ENCODE measurements at regions of chr1 and their contacts with region 1.

Region 1: DNA sequence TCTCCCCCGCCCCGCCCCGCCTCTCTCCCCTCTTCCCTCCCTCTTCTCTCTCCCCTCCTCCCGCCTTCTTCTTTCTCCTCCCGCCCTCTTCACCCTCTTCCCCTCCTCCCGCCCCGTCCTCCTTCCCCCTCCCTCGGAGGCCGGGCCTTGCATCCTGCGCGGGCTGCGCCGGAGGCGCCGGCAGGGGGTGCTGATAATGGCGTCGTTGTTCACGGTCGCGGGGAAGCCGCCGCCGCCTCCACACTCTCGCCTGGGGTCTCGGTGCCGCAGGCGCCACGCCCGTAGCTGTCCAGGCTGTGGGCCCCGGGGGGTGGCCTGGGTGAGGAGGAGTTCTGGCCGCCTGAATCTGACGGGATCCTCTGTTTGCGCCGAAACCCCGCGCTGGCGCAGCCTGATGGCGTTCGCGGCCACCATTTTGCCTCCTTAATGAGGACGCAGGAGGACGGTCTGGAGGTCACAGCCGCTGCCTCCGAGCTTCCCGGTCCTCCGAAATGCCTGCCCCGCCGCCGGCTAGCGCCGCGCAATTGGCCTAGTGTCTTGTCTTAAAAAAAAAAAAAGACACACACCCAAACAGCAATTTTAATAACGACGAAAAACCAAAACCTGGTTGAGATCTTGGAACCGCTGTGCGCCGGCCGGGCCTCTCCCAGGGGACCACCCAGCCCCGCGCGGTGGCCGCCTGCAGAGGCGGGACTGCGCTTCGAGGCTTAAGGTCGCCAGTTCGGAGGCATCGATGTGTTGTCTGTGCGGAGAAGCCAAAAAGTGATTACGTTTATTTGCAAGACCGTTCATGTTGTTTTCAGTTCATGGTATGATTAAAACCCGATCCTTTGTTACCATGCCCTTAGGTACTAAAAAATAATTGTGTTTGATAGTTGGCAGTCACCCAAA is 106.6 kb upstream of the HNRNPU start:
- DNase-seq: peak; percentile 96
- ATAC-seq: peak; percentile 66
- H3K4me3 ChIP-seq: peak overlapping the region; percentile 74
- H3K27ac ChIP-seq: peak overlapping the region; percentile 95
- H3K4me1 ChIP-seq: peaks cover 17% of the 10 kb centered on the region
- H3K27me3 ChIP-seq: no peaks in the 10 kb centered on the region
- CTCF ChIP-seq: peak; percentile 65

Region 2: DNA sequence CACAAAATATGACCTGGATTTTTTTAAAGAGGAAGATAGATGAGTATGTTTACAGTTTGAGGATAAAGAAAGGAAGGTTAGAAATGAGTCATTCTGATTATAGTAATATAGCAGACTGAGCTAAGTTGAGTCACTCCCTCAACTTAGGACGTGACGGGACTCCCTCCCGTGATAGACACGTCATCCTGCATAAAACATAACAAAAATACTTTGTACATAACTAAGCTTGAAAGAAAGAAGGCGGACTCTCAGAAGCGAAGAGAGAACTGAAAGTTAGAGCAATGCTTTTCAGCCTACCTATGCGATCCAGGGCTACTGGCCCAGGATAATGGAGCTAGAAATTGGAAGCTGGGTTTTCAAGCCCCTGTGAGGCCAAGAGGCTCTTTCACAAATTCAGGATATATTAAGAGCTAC is 371.0 kb before region 1 on chr1:
- CTCF ChIA-PET with region 1: no interaction called
- POLR2A ChIA-PET with region 1: no interaction called
- intact Hi-C with region 1: loop called (anchors 5 kb)
- DNase-seq: peak; percentile 98
- ATAC-seq: peak; percentile 95
- H3K4me3 ChIP-seq: peak overlapping the region; percentile 65
- H3K27ac ChIP-seq: peak overlapping the region; percentile 55
- H3K4me1 ChIP-seq: peaks cover 13% of the 10 kb centered on the region
- H3K27me3 ChIP-seq: no peaks in the 10 kb centered on the region
- CTCF ChIP-seq: no peak

Region 3: DNA sequence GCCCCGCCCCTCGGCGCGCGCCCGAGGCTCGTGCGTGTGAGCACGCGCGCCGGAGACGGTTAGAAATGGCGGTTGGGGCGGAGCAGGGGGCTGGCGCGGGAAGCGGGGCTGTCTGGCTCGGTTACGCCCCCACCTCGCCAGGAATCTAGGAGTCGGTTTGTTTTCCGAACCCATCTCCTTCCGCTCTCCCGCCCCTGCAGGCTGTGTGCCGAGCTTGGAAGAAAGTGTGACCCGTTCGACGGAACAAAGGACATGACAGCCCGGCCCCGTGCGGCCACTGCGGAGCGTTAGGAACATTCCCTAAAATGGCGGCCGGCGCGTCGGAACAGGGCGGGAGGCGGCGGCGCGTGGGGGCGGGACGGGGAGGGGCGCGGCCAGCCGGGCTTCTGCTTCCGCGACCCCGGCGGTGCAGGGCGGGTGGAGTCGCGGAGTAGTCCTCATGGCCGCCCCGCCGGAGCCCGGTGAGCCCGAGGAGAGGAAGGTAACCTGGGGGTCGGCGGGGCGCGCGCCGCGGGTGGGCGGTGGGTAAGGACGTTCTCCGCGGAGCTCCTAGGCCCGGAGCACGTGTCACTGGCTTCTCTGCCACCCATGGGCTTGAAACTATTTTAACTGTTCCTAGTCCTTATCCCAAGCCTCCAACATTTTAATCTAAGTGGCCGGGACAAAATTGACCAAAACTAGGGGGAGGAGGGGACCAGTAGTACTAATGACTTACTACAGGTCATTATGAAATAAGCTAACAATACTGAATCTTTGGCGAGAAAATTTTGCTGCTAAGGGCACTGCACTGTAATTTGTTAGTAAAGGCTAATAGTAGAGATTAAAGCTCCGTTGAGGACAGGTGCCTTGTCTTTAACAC is 135.4 kb before region 1 on chr1 and contains the start of gene COX20:
- CTCF ChIA-PET with region 1: no interaction called
- POLR2A ChIA-PET with region 1: interaction called, 10 read pairs
- intact Hi-C with region 1: loop called (anchors 1 kb)
- DNase-seq: peak; percentile 95
- ATAC-seq: peak; percentile 59
- H3K4me3 ChIP-seq: peak within 1 kb of the TSS; percentile 94
- H3K27ac ChIP-seq: peak within 1 kb of the TSS; percentile 91
- H3K4me1 ChIP-seq: peaks cover 47% of the 10 kb centered on the region
- H3K27me3 ChIP-seq: no peaks in the 10 kb centered on the region
- CTCF ChIP-seq: no peak
- total RNA-seq, gene COX20: 50.0 and 55.8 TPM in 2 replicates

Region 4: DNA sequence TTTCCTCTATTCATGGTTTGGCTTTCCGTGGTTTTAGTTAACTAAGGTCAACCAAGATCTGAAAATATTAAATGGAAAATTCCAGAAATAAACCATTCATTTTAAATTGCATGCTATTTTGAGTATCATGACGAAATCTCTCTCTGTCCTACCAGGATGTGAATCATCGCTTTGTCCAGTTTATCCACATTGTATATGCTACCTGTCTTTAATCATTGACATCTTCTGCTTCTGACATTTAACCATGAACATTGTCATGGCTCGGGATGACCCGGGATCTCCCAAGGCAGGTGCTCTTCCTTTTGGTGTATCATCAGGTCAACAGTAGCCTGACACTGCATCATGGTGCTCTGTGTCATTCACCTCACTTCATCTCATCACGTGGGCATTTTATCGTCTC is 18.9 kb after region 1 on chr1:
- CTCF ChIA-PET with region 1: no interaction called
- POLR2A ChIA-PET with region 1: interaction called, 14 read pairs
- intact Hi-C with region 1: no loop called
- DNase-seq: peak; percentile 54
- ATAC-seq: peak; percentile 68
- H3K4me3 ChIP-seq: no peak overlapping the region
- H3K27ac ChIP-seq: peak overlapping the region; percentile 34
- H3K4me1 ChIP-seq: peaks cover 16% of the 10 kb centered on the region
- H3K27me3 ChIP-seq: no peaks in the 10 kb centered on the region
- CTCF ChIP-seq: no peak

Region 5: GRCh38 chr1:245019910-245020486 is 49.1 kb after region 1 on chr1:
- CTCF ChIA-PET with region 1: no interaction called
- POLR2A ChIA-PET with region 1: no interaction called
- intact Hi-C with region 1: no loop called
- DNase-seq: no peak
- ATAC-seq: no peak
- H3K4me3 ChIP-seq: no peak overlapping the region
- H3K27ac ChIP-seq: no peak overlapping the region
- H3K4me1 ChIP-seq: peaks cover 2% of the 10 kb centered on the region; the same call in 1 of the 2 replicates
- H3K27me3 ChIP-seq: no peaks in the 10 kb centered on the region
- CTCF ChIP-seq: no peak

Measured in PC-3 (cell line).